ENCODE measurements at regions of chr10 and their contacts with region 1.

Region 1: DNA sequence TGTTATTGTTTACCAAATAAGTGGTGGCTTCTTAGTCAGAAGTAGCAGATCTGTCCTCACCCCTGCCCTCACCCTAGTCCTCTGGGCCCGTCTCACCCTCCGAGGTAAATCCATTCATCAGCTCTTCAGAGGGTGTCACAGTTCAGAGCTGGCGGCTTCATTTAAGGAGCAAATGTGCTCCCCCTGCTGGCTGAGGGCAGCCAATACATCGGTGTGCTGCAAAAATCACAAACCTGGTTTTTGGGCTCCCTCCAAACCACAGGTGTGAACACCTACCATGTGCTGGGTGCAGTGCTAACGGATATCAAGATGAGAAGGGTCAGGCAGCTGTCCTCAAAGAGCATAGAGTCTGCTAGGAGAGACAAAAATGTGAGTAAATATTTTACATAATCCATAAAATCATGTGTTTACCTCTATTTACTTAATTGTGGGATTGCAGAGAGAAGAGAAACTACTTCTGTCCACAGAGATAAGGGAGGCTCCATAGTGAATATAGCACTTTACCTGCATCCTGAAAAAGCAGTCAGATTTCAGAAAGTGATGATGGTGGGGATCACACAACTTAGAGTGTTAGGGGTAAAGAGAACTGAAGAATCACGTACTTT is 15.5 kb upstream of the CRTAC1 start:
- DNase-seq: peak; percentile 33 to 42
- ATAC-seq: peak; percentile 71

Region 2: GRCh38 chr10:97759158-97759887 is 286.6 kb before region 1 on chr10:
- intact Hi-C with region 1: no loop called
- DNase-seq: peak in 1 of 2 donors; percentile 72
- ATAC-seq: peak; percentile 73

Region 3: DNA sequence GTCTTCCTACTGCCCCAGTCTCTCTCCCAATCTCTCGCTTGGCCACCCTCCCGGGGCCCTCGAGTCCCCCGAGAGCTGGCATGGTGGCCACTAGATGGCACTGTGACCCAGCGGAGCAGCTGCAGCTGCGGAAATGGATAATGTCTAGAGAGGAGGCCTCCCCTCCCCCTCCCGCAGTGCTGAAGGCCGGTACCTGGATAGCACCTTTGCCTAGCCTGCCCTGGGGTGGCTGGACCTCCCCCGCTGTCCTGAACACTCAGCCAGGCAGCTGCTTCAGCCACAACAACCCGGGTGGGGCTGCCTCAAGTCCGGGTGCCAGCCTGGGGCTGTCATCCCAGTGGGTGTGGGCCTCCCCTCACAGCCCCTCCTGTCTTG is 131.1 kb before region 1 on chr10:
- intact Hi-C with region 1: loop called (anchors 5 to 10 kb)
- DNase-seq: peak; percentile 63 to 90
- ATAC-seq: peak; percentile 98

Region 4: DNA sequence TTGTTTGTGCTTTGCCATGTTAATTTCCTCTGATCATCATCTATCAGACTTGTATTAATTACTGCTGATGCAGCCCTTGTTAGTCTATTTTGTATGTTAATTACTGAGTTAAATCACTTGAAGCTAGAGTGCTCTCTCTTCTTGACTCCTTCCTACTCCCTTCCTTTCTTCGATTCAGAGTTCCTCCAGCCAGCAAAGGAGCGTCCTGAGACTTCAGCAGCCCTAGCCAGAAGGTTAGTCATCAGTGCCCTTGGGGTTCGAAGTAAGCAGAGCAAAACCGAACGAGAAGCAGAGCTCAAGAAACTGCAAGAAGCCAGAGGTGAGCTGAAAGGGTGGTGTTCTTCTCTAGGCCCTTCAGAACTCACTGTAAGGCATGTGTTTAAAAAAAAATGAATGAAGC is 190.0 kb after region 1 on chr10:
- intact Hi-C with region 1: no loop called
- DNase-seq: no peak
- ATAC-seq: no peak

Measured in left colon (tissue), 2 donors.